Activated CD8-positive, alpha-beta T cell treated with anti-CD3 and anti-CD28 coated beads, Interleukin-2, amount 10 ng/mL, durations not matched to agents 7 days and 5 days (primary cell): ENCODE measurements at regions of chr5 and their contacts with region 1.

Region 1: GRCh38 chr5:141420855-141421496 is at the start of gene PCDHGA11:
- DNase-seq: peak; percentile 53
- ATAC-seq: no peak
- H3K4me3 Mint-ChIP-seq: peak within 1 kb of the TSS; percentile 69
- H3K27ac Mint-ChIP-seq: peak within 1 kb of the TSS; percentile 35
- H3K4me1 Mint-ChIP-seq: peaks cover 11% of the 10 kb centered on the region
- H3K27me3 Mint-ChIP-seq: peaks cover 62% of the 10 kb centered on the region
- total RNA-seq, gene PCDHGA11: 0.05 TPM in 1 of 2 experiments, not detected in the other

Region 2: GRCh38 chr5:141369994-141370848 is 50.8 kb before region 1 on chr5 and contains the start of gene PCDHGB3:
- CTCF ChIA-PET with region 1: interaction called, 11 read pairs
- POLR2A ChIA-PET with region 1: no interaction called
- DNase-seq: peak; percentile 52
- ATAC-seq: peak; percentile 57
- H3K4me3 Mint-ChIP-seq: peak within 1 kb of the TSS; percentile 63
- H3K27ac Mint-ChIP-seq: no peak within 1 kb of the TSS
- H3K4me1 Mint-ChIP-seq: peaks cover 8% of the 10 kb centered on the region
- H3K27me3 Mint-ChIP-seq: peaks cover 45% of the 10 kb centered on the region
- total RNA-seq, gene PCDHGB3: 0.16 to 0.26 TPM

Region 3: GRCh38 chr5:141437221-141437620 is 16.2 kb after region 1 on chr5:
- CTCF ChIA-PET with region 1: no interaction called
- POLR2A ChIA-PET with region 1: no interaction called
- DNase-seq: no peak
- ATAC-seq: no peak
- H3K4me3 Mint-ChIP-seq: no peak overlapping the region
- H3K27ac Mint-ChIP-seq: no peak overlapping the region
- H3K4me1 Mint-ChIP-seq: peaks cover 2% of the 10 kb centered on the region
- H3K27me3 Mint-ChIP-seq: peaks cover 10% of the 10 kb centered on the region